AG04449 (cell line): ENCODE measurements at regions of chr2 and their contacts with region 1.

Region 1: GRCh38 chr2:240387669-240388358 is 47.6 kb upstream of the GPC1 start:
- DNase-seq: peak; percentile 67
- H3K4me3 ChIP-seq: no peak overlapping the region
- CTCF ChIP-seq: no peak

Region 2: DNA sequence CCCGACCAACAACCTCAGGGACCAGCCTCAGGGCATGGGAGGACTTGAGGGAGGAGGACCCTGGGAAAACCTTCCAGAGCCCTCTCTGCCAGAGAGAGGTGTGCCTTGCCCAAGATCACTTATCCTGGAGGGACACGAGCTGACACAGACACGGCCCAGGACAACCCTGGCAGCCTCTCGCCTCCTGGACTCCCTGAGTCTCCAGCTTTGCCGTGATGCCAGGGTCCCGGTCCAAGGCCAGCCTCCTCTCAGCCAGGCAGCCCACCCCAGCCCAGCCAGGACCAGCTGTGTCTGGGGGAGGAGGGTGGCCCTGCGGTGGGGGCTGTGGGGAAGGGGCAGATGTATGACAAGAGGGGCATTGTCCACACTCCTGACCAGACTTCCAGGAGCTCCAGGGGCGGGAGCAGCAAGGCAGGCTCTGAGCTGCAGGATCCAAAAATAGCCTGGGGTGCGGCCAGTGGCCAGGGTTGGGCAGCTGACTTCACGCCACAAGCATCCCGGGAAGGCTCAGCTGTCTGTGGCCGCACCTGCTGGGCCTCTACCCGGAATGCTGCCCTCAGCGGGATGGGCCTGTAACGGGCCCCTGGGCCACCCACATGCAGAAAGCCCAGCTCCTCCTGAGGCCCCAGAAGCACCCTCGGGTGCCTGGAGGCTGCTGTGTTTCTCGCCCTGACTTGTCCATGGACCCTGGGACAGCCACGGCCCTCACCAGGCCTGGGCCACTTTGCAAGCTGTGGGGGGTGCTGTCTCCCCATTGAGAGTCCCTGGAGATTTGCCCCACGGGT is 17.8 kb before region 1 on chr2:
- CTCF ChIA-PET with region 1: interaction called, 18 read pairs
- POLR2A ChIA-PET with region 1: interaction called, 13 read pairs
- DNase-seq: peak; percentile 76
- H3K4me3 ChIP-seq: no peak overlapping the region; the same call in 1 of the 2 replicates
- CTCF ChIP-seq: peak; percentile 3

Region 3: DNA sequence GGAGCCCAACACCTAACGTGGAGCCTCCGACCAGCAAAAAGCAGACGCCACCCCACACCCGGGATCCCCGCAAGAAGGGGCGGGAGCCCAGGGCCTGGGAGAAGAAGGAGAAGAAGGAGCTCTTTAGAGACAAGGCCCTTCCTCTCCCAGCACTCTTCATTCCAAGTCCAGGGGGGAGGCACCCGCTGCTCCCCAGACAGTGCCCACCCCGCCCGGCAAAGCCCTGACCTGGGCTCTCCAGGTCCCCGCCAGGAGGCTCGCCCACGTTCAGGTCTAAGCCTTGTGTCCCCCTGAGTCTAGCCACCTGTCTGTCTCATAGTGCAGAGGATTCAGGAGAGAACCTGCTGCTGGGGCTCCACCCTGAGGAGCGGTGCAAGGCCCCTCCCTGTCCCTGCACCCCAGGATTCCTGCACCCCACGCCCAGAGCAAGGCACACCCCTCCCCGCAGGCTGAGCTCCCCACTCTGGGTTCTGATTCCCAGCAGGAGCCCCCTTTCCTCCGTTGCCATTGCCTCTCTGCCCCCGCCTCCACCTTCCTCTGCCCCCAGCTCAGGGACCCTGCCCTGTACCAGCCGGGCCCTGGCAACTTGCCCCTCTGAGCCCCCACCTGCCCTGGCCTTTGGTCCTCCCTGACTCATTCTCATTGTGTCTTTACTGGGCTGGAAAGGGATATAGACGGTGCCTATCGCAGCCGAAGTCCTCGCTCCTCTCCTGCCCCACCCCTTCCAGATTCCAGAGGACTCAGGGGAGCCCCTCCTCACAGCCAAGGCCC is 14.2 kb after region 1 on chr2:
- CTCF ChIA-PET with region 1: no interaction called
- POLR2A ChIA-PET with region 1: no interaction called
- DNase-seq: no peak
- H3K4me3 ChIP-seq: no peak overlapping the region
- CTCF ChIP-seq: no peak

Region 4: GRCh38 chr2:240519396-240520129 is 131.7 kb after region 1 on chr2:
- CTCF ChIA-PET with region 1: no interaction called
- POLR2A ChIA-PET with region 1: no interaction called
- DNase-seq: no peak
- H3K4me3 ChIP-seq: peak overlapping the region; percentile 34
- CTCF ChIP-seq: no peak